Esophagus squamous epithelium (tissue), 5 donors: ENCODE measurements at regions of chr16 and their contacts with region 1.

Region 1: GRCh38 chr16:87874639-87875465 is 5.5 kb upstream of the SLC7A5 start:
- DNase-seq: no peak
- H3K4me3 ChIP-seq: no peak overlapping the region
- H3K27ac ChIP-seq: no peak overlapping the region
- H3K4me1 ChIP-seq: peaks cover 3 to 26% (median 4%) of the 10 kb centered on the region in 3 donors
- H3K27me3 ChIP-seq: peaks cover 0 to 52% (median 0%) of the 10 kb centered on the region in 4 donors
- CTCF ChIP-seq: no peak
- POLR2A ChIP-seq: no peak

Region 2: DNA sequence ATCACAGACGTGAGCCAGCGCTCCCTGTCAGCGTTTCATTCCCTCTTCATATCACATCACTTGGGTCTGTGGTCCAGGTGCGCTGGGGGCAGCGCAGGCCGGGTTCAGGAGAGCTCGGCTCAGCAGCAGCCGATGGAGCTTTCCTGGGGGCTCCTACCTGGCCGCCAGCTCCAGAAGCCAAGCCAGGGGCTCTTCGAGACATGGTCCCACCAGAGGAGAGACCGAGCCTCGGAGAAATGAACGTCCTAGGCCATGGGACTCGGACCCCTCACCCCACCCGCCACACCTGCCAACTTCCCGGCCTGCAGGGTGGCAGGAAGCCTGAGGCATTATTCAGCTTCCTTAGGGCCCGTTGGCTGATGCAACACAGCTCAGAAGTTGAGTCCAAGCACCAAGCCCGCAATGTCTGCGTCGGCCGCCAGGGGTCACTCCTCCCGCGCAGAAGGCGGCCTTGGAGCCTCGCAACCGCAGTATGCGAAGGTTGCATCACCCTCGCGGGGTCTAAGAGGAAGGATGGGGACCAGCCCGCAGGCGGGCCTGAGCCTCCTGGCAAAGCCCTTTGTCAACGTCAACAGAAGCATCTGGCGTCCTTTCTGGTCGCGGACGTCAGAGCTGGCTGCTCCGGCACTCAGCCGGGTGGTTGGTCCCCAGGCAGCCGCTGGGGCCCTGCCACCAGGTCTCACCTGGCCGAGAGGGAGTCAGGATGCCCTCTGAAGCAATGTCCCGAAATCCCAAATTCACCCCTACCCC is 95.8 kb before region 1 on chr16:
- intact Hi-C with region 1: loop called (anchors 2 kb)
- DNase-seq: peak; percentile 50
- H3K4me3 ChIP-seq: no peak overlapping the region
- H3K27ac ChIP-seq: peak overlapping the region; percentile 56 to 68 (median 65)
- H3K4me1 ChIP-seq: peaks cover 20 to 41% (median 22%) of the 10 kb centered on the region in 3 donors
- H3K27me3 ChIP-seq: peaks cover 0 to 26% (median 0%) of the 10 kb centered on the region in 4 donors
- CTCF ChIP-seq: peak; percentile 90 to 100 (median 99)
- POLR2A ChIP-seq: no peak

Region 3: DNA sequence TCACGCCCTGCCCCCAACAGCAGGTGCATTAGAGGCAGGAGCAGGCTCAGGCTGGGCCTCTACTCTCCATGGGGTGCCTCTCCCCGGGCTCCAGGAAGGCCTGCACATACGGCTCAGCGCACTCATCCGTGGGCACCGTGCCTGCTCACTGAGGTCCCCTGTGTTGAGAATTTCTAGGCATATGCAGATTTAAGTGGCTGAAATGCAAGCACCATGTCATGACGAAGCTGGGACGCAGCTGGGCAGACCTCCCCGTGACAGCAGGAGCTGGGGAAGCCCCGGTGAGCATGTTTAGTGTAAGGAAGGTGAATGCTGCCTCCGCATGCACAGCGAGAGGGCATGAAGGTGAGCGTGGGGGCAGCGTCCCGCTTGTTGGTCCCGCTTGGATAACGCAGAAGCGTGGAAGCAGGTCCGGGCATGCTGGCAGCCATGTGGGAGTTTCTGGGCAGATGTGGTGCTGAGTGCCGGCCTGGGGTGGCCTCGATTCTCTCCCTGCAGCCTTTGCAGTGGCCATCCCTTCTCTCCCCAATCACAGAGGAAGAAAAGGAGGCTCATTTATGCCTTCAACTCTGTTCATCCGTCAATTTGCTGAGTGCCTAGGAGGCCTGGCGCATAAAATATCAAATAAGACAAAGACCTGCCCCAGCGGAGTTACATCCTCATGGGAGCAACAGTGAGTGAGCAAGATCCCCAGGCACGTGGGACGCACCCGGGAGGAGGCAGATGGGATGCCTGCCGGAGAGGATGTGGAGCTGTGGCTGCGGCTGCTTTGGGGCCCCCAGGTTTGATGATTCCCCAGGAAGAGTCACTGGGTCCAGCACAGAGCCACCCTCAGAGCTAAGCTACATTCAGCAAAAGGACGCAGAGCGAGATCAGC is 49.8 kb after region 1 on chr16:
- intact Hi-C with region 1: no loop called
- DNase-seq: no peak
- H3K4me3 ChIP-seq: no peak overlapping the region
- H3K27ac ChIP-seq: no peak overlapping the region
- H3K4me1 ChIP-seq: peaks cover 0 to 20% (median 7%) of the 10 kb centered on the region in 3 donors
- H3K27me3 ChIP-seq: peaks cover 0 to 25% (median 0%) of the 10 kb centered on the region in 4 donors
- CTCF ChIP-seq: no peak
- POLR2A ChIP-seq: no peak

Region 4: DNA sequence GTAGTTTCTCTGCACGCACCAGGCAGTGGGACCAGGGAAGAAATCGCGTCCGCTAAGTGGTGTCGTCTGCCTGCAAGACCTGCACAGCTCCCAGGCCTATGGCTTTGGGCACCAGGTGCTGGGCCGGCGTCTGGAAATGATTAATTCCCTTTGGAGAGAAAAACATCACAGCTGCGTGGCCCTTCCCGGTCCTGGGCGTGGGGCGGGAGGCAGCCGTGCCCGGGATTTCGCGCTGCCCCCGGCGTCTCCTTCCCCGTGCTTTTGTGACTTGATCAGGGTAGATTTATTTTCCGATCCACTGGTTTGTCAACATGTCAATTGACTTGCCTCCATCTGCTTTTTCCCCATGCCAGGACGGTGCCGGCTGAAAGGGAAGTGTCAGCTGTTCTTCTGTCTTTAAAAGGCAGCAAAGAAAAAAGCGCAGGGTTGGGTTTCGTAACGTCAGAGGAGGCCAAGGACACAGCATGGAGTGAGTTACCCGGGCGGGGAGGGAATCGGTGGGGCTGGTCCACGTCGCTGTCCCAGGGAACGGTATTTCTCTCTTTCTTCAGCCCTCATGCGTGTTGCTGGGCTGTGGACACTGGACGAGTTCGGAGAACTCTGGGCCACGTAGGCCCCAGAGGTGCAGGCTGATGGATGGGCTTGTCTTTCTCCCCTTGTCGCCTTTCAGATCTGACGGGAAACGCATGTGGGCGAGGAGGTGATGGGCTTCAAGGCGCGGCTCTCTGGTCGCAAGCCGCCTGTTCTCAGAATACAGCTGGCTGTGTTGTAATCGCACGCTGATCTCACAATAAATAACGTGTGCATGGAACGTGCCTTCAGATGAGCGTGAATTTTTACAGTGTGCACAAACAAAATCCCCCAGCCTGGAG is 319.8 kb after region 1 on chr16:
- intact Hi-C with region 1: no loop called
- DNase-seq: no peak
- H3K4me3 ChIP-seq: peak overlapping the region in 3 of 4 donors; percentile 4 to 23 (median 4)
- H3K27ac ChIP-seq: peak overlapping the region; percentile 19 to 59 (median 43)
- H3K4me1 ChIP-seq: peaks cover 3 to 21% (median 7%) of the 10 kb centered on the region in 3 donors
- H3K27me3 ChIP-seq: peaks cover 0 to 38% (median 0%) of the 10 kb centered on the region in 4 donors
- CTCF ChIP-seq: no peak
- POLR2A ChIP-seq: no peak